ENCODE measurements at regions of chr14 and their contacts with region 1.

Region 1: GRCh38 chr14:76151398-76152339 is at the start of gene GPATCH2L:
- DNase-seq: peak; percentile 93
- H3K4me3 Mint-ChIP-seq: peak within 1 kb of the TSS; percentile 95
- H3K27ac Mint-ChIP-seq: peak within 1 kb of the TSS; percentile 98
- H3K4me1 Mint-ChIP-seq: peaks cover 37% of the 10 kb centered on the region
- H3K27me3 Mint-ChIP-seq: no peaks in the 10 kb centered on the region
- CTCF ChIP-seq: no peak
- total RNA-seq, gene GPATCH2L: 57.4 and 64.9 TPM in 2 replicates

Region 2: GRCh38 chr14:76063327-76063726 is 88.3 kb before region 1 on chr14:
- CTCF ChIA-PET with region 1: no interaction called
- POLR2A ChIA-PET with region 1: no interaction called
- intact Hi-C with region 1: no loop called
- DNase-seq: no peak
- H3K4me3 Mint-ChIP-seq: no peak overlapping the region
- H3K27ac Mint-ChIP-seq: no peak overlapping the region
- H3K4me1 Mint-ChIP-seq: no peaks in the 10 kb centered on the region
- H3K27me3 Mint-ChIP-seq: no peaks in the 10 kb centered on the region
- CTCF ChIP-seq: no peak

Region 3: DNA sequence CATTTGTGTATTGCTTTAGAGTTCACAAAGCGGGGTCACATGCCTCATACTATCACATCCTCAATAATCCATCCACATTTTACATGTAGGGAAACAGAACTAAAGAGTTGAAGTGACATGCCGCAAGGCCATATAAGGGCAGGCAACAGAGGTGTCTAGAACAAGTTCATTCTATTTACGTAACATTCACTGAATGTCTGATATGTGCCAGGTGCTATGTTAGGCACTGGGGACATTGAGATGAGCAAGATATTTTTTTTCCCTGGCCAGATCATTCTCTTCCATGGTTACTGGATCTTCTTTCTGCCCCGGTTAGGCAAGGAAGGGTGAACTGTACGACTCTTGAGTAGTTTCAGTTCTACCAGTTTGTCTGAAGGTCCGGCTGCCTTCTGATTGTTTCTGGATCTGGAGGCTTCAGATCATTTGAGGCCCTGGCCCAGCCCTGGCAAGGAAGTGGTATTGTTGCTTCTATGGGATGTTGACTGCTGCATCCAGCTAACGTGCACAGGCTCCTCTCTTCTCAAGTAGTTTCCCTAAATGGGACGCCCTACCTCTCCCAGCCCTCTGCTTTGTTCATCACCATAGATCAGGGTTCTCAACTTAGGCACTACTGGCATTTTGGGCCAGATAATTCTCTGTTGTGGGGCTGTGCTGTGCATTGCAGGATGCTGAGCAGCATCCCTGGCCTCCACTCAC is 12.1 kb after region 1 on chr14:
- CTCF ChIA-PET with region 1: interaction called, 5 read pairs
- POLR2A ChIA-PET with region 1: interaction called, 10 read pairs
- intact Hi-C with region 1: no loop called
- DNase-seq: no peak
- H3K4me3 Mint-ChIP-seq: no peak overlapping the region
- H3K27ac Mint-ChIP-seq: no peak overlapping the region
- H3K4me1 Mint-ChIP-seq: peaks cover 8% of the 10 kb centered on the region
- H3K27me3 Mint-ChIP-seq: no peaks in the 10 kb centered on the region
- CTCF ChIP-seq: no peak

Measured in MCF 10A (cell line).